CD8-positive, alpha-beta T cell (primary cell): ENCODE measurements at regions of chr17 and their contacts with region 1.

Region 1: GRCh38 chr17:7035591-7036368 is at the start of gene SLC16A13:
- DNase-seq: peak; percentile 95 to 100 (median 98)
- ATAC-seq: peak; percentile 92
- H3K4me3 ChIP-seq: peak within 1 kb of the TSS; percentile 59 to 94
- H3K4me3 Mint-ChIP-seq: peak within 1 kb of the TSS; percentile 92
- H3K27ac ChIP-seq: peak within 1 kb of the TSS; percentile 85 to 98
- H3K27ac Mint-ChIP-seq: peak within 1 kb of the TSS; percentile 98
- H3K4me1 ChIP-seq: peaks cover 49% of the 10 kb centered on the region
- H3K4me1 Mint-ChIP-seq: peaks cover 50% of the 10 kb centered on the region
- H3K27me3 ChIP-seq: no peaks in the 10 kb centered on the region
- H3K27me3 Mint-ChIP-seq: no peaks in the 10 kb centered on the region
- CTCF ChIP-seq: no peak
- total RNA-seq, gene SLC16A13: 1.8 to 1.9 TPM

Region 2: DNA sequence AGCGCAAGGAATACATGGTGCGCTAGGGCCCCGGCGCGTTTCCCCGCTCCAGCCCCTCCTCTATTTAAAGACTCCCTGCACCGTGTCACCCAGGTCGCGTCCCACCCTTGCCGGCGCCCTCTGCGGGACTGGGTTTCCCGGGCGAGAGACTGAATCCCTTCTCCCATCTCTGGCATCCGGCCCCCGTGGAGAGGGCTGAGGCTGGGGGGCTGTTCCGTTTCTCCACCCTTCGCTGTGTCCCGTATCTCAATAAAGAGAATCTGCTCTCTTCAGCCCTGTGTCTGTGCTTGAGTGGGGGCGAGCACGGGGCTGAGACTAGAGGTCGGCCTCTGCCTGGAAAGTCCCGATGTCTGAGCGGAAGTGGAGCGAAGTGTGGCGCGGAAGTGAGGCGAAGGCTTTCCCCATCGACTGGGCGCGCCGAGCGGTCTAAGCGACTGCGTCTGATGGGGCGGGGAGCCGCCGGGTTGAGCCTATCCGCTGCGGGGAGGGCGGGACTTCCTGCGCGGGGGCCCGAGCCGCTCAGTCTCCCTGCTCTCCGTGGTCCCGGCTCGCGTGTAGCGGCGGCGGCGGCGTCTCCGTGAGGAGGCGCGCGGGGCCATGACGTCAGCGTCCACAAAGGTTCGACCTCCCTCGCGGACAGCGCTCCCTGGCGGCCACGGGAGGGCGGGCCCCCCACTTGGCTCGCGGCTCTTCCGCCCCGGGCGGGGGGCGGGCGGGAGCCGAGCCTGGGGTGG is 21.4 kb before region 1 on chr17:
- CTCF ChIA-PET with region 1: interaction called, 3 read pairs
- POLR2A ChIA-PET with region 1: interaction called, 17 read pairs
- intact Hi-C with region 1: loop called (anchors 1 kb)
- DNase-seq: peak; percentile 94 to 100 (median 97)
- ATAC-seq: peak; percentile 79
- H3K4me3 ChIP-seq: peak overlapping the region; percentile 69 to 70
- H3K4me3 Mint-ChIP-seq: peak overlapping the region; percentile 98
- H3K27ac ChIP-seq: peak overlapping the region; percentile 95 to 99
- H3K27ac Mint-ChIP-seq: peak overlapping the region; percentile 100
- H3K4me1 ChIP-seq: peaks cover 63% of the 10 kb centered on the region
- H3K4me1 Mint-ChIP-seq: peaks cover 78% of the 10 kb centered on the region
- H3K27me3 ChIP-seq: no peaks in the 10 kb centered on the region
- H3K27me3 Mint-ChIP-seq: no peaks in the 10 kb centered on the region
- CTCF ChIP-seq: peak; percentile 61